Caco-2 (cell line): ENCODE measurements at regions of chr2 and their contacts with region 1.

Region 1: DNA sequence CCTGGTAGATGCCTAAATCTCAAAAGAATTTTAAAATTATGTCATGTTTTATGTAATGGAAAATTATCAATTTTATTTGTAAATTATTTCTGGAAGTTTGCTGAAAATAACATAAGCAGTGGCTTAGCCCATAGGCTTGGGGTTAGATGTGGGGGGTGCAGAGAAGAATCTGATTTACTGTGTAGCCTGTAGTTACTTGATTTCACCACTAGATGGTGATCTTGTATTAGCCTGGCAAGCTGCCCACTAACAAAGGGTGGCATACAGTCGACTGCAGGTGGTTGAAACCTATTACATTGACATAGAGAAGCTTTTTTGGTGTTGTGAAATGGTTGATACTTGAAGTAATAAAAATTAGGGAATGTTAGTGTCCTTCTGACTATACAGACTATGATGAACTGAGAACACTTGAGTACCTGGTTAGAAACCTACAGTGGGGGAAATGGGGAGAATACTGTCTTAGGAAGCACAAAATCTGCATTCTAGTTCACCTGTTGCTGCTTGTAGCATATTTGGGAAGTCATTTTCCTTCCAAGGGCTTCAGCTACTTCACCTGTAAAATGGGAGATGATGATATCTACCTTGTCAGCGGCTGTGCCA is 191.0 kb upstream of the LHCGR start:
- DNase-seq: peak in 1 of 2 experiments; percentile 62
- H3K4me3 ChIP-seq: no peak overlapping the region
- H3K4me3 Mint-ChIP-seq: no peak overlapping the region
- H3K27ac Mint-ChIP-seq: no peak overlapping the region
- H3K4me1 ChIP-seq: no peaks in the 10 kb centered on the region
- H3K4me1 Mint-ChIP-seq: no peaks in the 10 kb centered on the region
- H3K27me3 ChIP-seq: no peaks in the 10 kb centered on the region; the same call in 1 of the 2 replicates
- H3K27me3 Mint-ChIP-seq: peaks cover 9% of the 10 kb centered on the region
- CTCF ChIP-seq: peak; percentile 87 to 93

Region 2: DNA sequence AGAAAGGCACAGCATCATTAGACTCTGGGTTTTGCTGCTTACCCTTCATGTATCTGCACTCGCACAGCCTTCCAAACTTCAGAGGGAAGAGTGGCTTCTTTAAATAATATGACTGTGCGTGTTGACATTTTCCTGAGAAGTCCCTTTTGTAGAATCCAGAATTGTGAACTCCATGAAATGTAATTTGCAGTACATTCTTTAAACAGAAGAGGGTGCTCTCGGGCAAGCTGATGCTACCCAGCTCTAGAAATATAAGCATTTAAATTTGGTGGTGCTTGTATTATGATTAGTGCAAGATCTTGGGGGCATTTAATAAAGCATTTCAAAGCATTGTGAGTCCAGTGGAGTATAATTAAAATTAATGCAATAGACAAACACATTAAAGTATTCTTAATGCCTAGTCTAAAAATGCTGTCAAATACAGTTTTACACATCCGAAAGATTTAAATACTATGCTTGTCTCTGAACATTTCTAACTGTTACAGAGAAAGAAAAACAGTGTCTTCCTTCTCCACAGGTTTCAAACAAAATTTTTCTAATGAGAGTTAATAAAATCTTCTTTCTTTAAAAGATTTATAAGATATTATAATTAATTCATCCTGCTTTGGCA is 346.2 kb before region 1 on chr2:
- CTCF ChIA-PET with region 1: no interaction called
- POLR2A ChIA-PET with region 1: no interaction called
- intact Hi-C with region 1: loop called (anchors 2 kb)
- DNase-seq: peak in 1 of 2 experiments; percentile 66
- H3K4me3 ChIP-seq: no peak overlapping the region
- H3K4me3 Mint-ChIP-seq: no peak overlapping the region
- H3K27ac Mint-ChIP-seq: no peak overlapping the region
- H3K4me1 ChIP-seq: no peaks in the 10 kb centered on the region
- H3K4me1 Mint-ChIP-seq: no peaks in the 10 kb centered on the region
- H3K27me3 ChIP-seq: no peaks in the 10 kb centered on the region
- H3K27me3 Mint-ChIP-seq: no peaks in the 10 kb centered on the region
- CTCF ChIP-seq: peak; percentile 81 to 83

Region 3: GRCh38 chr2:49044350-49045079 is 98.0 kb after region 1 on chr2:
- CTCF ChIA-PET with region 1: no interaction called
- POLR2A ChIA-PET with region 1: no interaction called
- intact Hi-C with region 1: loop called (anchors 2 kb)
- DNase-seq: peak in 1 of 2 experiments; percentile 18
- H3K4me3 ChIP-seq: no peak overlapping the region
- H3K4me3 Mint-ChIP-seq: no peak overlapping the region
- H3K27ac Mint-ChIP-seq: no peak overlapping the region
- H3K4me1 ChIP-seq: no peaks in the 10 kb centered on the region
- H3K4me1 Mint-ChIP-seq: no peaks in the 10 kb centered on the region
- H3K27me3 ChIP-seq: no peaks in the 10 kb centered on the region
- H3K27me3 Mint-ChIP-seq: peaks cover 3% of the 10 kb centered on the region
- CTCF ChIP-seq: peak; percentile 37 to 43

Region 4: DNA sequence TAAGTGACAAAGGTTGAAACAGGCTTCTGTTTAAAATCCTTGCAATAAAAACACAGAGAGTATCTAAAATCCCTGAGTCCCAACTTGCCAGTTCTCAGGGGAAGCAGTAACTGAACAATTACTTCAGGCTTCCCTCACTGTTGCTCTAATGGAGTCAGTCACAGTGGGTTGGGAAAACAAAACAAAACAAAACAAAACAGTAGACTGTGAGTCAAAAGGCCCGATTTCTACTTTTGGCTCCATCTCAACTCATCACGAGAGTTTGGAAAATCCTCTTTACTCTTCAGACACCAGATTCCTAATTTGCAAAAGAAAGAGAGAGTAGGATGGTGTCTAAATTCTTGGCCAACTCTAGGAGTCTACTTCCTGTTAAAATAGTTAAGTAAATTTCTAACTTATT is 206.7 kb after region 1 on chr2:
- CTCF ChIA-PET with region 1: no interaction called
- POLR2A ChIA-PET with region 1: no interaction called
- intact Hi-C with region 1: no loop called
- DNase-seq: no peak
- H3K4me3 ChIP-seq: no peak overlapping the region
- H3K4me3 Mint-ChIP-seq: peak overlapping the region; percentile 0
- H3K27ac Mint-ChIP-seq: no peak overlapping the region
- H3K4me1 ChIP-seq: no peaks in the 10 kb centered on the region
- H3K4me1 Mint-ChIP-seq: peaks cover 8% of the 10 kb centered on the region
- H3K27me3 ChIP-seq: no peaks in the 10 kb centered on the region
- H3K27me3 Mint-ChIP-seq: no peaks in the 10 kb centered on the region
- CTCF ChIP-seq: no peak

Region 5: DNA sequence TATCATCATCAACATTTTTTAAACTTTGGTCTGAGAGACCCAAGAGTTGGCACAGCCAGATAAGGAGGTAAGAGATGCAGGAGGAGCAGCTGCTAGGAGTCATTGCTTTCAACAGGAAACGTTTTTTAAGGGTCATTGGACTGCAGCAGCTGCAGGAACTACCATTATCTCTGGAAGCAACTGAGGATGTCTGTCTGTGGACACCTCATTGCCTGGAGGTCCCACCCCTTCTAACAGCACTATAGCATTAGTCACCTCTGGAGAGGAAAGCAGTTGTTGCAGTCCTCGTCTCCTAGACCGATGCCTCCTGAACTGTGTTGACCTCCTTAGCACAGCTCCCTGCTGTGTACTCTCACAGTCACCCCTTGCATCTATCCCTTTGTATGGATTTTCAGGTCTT is 229.3 kb after region 1 on chr2:
- CTCF ChIA-PET with region 1: no interaction called
- POLR2A ChIA-PET with region 1: no interaction called
- intact Hi-C with region 1: loop called (anchors 2 kb)
- DNase-seq: no peak
- H3K4me3 ChIP-seq: no peak overlapping the region
- H3K4me3 Mint-ChIP-seq: no peak overlapping the region
- H3K27ac Mint-ChIP-seq: no peak overlapping the region
- H3K4me1 ChIP-seq: no peaks in the 10 kb centered on the region
- H3K4me1 Mint-ChIP-seq: no peaks in the 10 kb centered on the region
- H3K27me3 ChIP-seq: no peaks in the 10 kb centered on the region
- H3K27me3 Mint-ChIP-seq: no peaks in the 10 kb centered on the region
- CTCF ChIP-seq: no peak

Region 6: DNA sequence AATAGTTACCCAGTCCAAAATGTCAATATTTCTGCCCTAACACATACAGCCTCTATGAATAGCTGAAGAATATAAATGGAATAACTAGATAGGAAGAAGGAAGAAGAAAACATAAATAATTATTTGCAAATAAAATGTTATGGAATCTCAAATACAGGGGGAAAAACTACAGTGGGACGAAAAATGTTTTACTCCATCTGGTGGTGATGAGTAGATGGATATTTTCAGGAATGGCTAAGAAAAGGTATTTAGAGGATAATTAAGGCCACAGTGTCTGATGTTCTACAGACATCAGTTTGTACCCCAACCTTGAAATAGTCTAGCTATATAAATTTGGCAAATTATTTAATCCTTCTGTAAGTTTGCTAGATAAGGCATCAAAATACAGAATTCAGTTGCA is 385.9 kb after region 1 on chr2:
- CTCF ChIA-PET with region 1: no interaction called
- POLR2A ChIA-PET with region 1: no interaction called
- intact Hi-C with region 1: loop called (anchors 1 kb)
- DNase-seq: no peak
- H3K4me3 ChIP-seq: no peak overlapping the region
- H3K4me3 Mint-ChIP-seq: no peak overlapping the region
- H3K27ac Mint-ChIP-seq: no peak overlapping the region
- H3K4me1 ChIP-seq: no peaks in the 10 kb centered on the region
- H3K4me1 Mint-ChIP-seq: no peaks in the 10 kb centered on the region
- H3K27me3 ChIP-seq: no peaks in the 10 kb centered on the region
- H3K27me3 Mint-ChIP-seq: peaks cover 6% of the 10 kb centered on the region
- CTCF ChIP-seq: no peak

Region 7: GRCh38 chr2:49616800-49617199 is 670.3 kb after region 1 on chr2:
- CTCF ChIA-PET with region 1: no interaction called
- POLR2A ChIA-PET with region 1: no interaction called
- intact Hi-C with region 1: loop called (anchors 2 kb)
- DNase-seq: peak in 1 of 2 experiments; percentile 42
- H3K4me3 ChIP-seq: no peak overlapping the region
- H3K4me3 Mint-ChIP-seq: no peak overlapping the region
- H3K27ac Mint-ChIP-seq: no peak overlapping the region
- H3K4me1 ChIP-seq: peaks cover 9% of the 10 kb centered on the region
- H3K4me1 Mint-ChIP-seq: no peaks in the 10 kb centered on the region
- H3K27me3 ChIP-seq: no peaks in the 10 kb centered on the region
- H3K27me3 Mint-ChIP-seq: no peaks in the 10 kb centered on the region
- CTCF ChIP-seq: peak; percentile 48 to 67

Region 8: DNA sequence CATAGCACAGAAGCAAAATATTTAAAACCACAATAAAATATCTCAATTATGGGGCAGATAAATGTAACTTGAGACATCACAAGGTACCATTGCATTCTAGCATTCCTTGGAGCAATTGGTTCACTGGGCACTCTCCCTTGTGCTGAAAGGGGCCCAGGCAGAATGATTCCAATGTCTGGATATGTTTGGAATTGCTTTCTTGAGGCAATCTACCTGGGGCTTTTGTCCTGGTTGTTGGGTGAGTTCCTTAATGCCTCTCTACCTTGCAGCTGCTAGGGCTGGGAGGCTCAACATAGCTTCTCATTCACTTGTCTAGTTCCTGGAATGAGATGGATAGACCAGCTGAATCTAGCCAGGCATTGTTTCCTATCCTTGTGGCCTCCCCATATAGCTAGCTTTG is 747.4 kb after region 1 on chr2:
- CTCF ChIA-PET with region 1: no interaction called
- POLR2A ChIA-PET with region 1: no interaction called
- intact Hi-C with region 1: no loop called
- DNase-seq: no peak
- H3K4me3 ChIP-seq: no peak overlapping the region
- H3K4me3 Mint-ChIP-seq: no peak overlapping the region
- H3K27ac Mint-ChIP-seq: no peak overlapping the region
- H3K4me1 ChIP-seq: no peaks in the 10 kb centered on the region
- H3K4me1 Mint-ChIP-seq: no peaks in the 10 kb centered on the region
- H3K27me3 ChIP-seq: no peaks in the 10 kb centered on the region
- H3K27me3 Mint-ChIP-seq: no peaks in the 10 kb centered on the region
- CTCF ChIP-seq: no peak

Region 9: DNA sequence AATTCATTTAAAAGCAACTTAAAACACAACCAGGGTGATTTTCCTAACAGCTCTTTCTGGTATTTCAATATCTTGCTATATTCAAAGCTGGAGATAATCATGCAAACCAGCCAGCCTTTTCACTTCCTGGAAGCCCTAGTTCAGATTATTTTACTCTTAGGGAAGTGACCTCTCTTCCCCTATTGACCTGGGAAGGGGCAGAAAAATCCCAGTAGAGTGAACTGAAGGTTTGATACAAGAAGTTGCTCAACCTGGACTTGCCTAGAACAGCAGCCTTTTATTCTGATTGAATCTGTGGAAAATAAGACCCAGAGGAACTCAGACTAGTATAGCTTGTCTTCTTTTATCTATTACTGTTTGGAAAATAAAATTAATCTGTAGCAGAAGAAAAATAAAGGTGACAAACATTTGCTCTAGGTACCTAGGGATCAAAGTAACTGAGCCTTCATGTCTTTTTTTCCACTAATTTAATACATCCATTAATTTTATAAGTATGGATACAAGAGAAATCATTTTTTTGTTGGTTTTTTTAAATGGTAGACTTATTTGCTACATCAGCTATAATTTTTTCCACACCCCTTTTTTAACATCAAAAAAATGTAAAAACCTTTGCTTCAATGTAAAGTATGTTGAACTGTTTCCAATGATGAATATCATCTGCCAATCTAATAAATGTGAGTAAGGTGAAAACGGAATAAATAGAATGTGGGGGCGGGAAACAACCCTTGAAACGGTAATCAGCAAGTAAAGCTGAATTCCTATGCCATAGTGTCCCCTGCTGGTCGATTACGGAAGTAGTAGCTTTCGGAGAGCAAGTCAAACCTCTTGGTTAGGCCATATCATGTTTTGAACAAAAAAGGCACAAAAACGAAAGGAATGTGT is 1455.5 kb after region 1 on chr2:
- CTCF ChIA-PET with region 1: no interaction called
- POLR2A ChIA-PET with region 1: no interaction called
- intact Hi-C with region 1: loop called (anchors 1 kb)
- DNase-seq: peak; percentile 51 to 66
- H3K4me3 ChIP-seq: no peak overlapping the region
- H3K4me3 Mint-ChIP-seq: no peak overlapping the region
- H3K27ac Mint-ChIP-seq: no peak overlapping the region
- H3K4me1 ChIP-seq: no peaks in the 10 kb centered on the region
- H3K4me1 Mint-ChIP-seq: no peaks in the 10 kb centered on the region
- H3K27me3 ChIP-seq: no peaks in the 10 kb centered on the region
- H3K27me3 Mint-ChIP-seq: no peaks in the 10 kb centered on the region
- CTCF ChIP-seq: peak; percentile 82 to 88